ENCODE measurements at regions of chr12 and their contacts with region 1.

Region 1: DNA sequence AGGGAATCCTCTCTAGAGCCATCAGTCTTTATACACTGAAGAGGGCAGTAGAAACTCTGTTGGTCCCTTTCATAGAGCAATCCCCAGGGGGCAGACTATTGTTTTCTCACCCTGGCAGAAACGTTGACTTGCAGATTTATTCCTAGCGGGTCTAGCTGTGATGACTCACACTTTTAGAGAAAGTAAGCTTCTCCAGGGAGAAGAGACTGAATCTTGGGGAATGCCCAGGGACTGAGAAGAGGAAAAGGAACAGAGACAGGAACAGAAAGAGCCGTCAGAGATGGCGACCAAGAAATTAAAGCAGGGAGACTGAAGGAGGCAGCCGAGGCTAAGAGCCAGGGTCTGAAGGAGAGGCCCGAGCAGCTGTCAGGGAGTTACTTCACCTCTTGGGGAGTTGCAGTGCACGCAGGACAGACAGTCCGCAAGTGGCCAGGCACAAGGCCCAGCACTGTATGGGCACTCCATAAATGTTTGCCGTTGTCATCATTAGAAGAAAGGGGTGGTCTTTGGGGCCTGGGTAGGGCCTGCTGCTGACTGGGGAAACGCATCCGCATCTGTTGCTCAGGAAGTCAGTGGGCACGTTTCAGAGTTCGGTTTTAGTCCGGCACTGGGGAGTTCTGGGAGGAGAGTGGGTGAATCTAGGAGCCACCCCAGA is 13.0 kb downstream of the PLEKHG6 start:
- DNase-seq: peak in 6 of 9 experiments; percentile 40 to 83 (median 59)
- ATAC-seq: peak; percentile 85
- H3K4me3 ChIP-seq: peak overlapping the region; percentile 12 to 19
- H3K4me3 Mint-ChIP-seq: peak overlapping the region; percentile 80
- H3K27ac ChIP-seq: peak overlapping the region in 1 of 2 experiments; percentile 54
- H3K27ac Mint-ChIP-seq: peak overlapping the region; percentile 93
- H3K4me1 ChIP-seq: peaks cover 47% of the 10 kb centered on the region
- H3K4me1 Mint-ChIP-seq: peaks cover 63% of the 10 kb centered on the region
- H3K27me3 ChIP-seq: no peaks in the 10 kb centered on the region
- H3K27me3 Mint-ChIP-seq: no peaks in the 10 kb centered on the region
- CTCF ChIP-seq: peak; percentile 82

Region 2: GRCh38 chr12:6154730-6155459 is 168.6 kb before region 1 on chr12:
- CTCF ChIA-PET with region 1: no interaction called
- POLR2A ChIA-PET with region 1: no interaction called
- intact Hi-C with region 1: no loop called
- DNase-seq: no peak
- ATAC-seq: no peak
- H3K4me3 ChIP-seq: no peak overlapping the region
- H3K4me3 Mint-ChIP-seq: no peak overlapping the region
- H3K27ac ChIP-seq: no peak overlapping the region
- H3K27ac Mint-ChIP-seq: no peak overlapping the region
- H3K4me1 ChIP-seq: no peaks in the 10 kb centered on the region
- H3K4me1 Mint-ChIP-seq: peaks cover 9% of the 10 kb centered on the region
- H3K27me3 ChIP-seq: no peaks in the 10 kb centered on the region
- H3K27me3 Mint-ChIP-seq: no peaks in the 10 kb centered on the region
- CTCF ChIP-seq: no peak

Region 3: DNA sequence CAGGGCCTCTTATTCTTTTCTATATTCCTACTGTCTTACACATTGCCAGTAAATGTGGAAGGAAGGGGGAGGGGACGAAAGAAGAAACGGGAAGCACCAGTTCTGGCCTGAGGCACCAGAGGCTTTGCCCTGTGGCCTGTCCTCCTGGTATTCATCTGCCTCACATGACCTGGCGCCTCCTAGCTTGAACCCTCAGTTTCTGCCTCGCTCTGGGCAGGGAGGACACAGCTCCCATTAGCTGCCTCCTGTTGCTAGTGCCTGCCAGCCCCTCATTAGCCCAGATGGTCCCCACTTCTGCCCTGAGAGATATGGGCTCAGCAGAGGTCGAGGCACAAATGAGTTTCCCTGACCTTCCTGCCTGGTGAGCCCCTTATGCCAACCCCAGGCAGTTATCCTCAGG is 15.9 kb before region 1 on chr12:
- CTCF ChIA-PET with region 1: interaction called, 12 read pairs
- POLR2A ChIA-PET with region 1: no interaction called
- intact Hi-C with region 1: no loop called
- DNase-seq: no peak
- ATAC-seq: no peak
- H3K4me3 ChIP-seq: no peak overlapping the region
- H3K4me3 Mint-ChIP-seq: no peak overlapping the region
- H3K27ac ChIP-seq: no peak overlapping the region
- H3K27ac Mint-ChIP-seq: no peak overlapping the region
- H3K4me1 ChIP-seq: peaks cover 9% of the 10 kb centered on the region
- H3K4me1 Mint-ChIP-seq: no peaks in the 10 kb centered on the region
- H3K27me3 ChIP-seq: peaks cover 7 to 9% of the 10 kb centered on the region in 2 experiments
- H3K27me3 Mint-ChIP-seq: peaks cover 16% of the 10 kb centered on the region
- CTCF ChIP-seq: no peak

Region 4: GRCh38 chr12:6367065-6367968 is 43.9 kb after region 1 on chr12:
- CTCF ChIA-PET with region 1: interaction called, 36 read pairs
- POLR2A ChIA-PET with region 1: interaction called, 6 read pairs
- intact Hi-C with region 1: loop called (anchors 1 kb)
- DNase-seq: peak in 7 of 9 experiments; percentile 34 to 81 (median 54)
- ATAC-seq: peak; percentile 66
- H3K4me3 ChIP-seq: no peak overlapping the region
- H3K4me3 Mint-ChIP-seq: peak overlapping the region; percentile 26
- H3K27ac ChIP-seq: peak overlapping the region in 1 of 2 experiments; percentile 51
- H3K27ac Mint-ChIP-seq: peak overlapping the region; percentile 69
- H3K4me1 ChIP-seq: peaks cover 25% of the 10 kb centered on the region
- H3K4me1 Mint-ChIP-seq: peaks cover 37% of the 10 kb centered on the region
- H3K27me3 ChIP-seq: no peaks in the 10 kb centered on the region
- H3K27me3 Mint-ChIP-seq: no peaks in the 10 kb centered on the region
- CTCF ChIP-seq: no peak

Region 5: GRCh38 chr12:6380141-6381121 is 57.0 kb after region 1 on chr12:
- CTCF ChIA-PET with region 1: interaction called, 5 read pairs
- POLR2A ChIA-PET with region 1: interaction called, 10 read pairs
- intact Hi-C with region 1: no loop called
- DNase-seq: no peak
- ATAC-seq: no peak
- H3K4me3 ChIP-seq: no peak overlapping the region
- H3K4me3 Mint-ChIP-seq: no peak overlapping the region
- H3K27ac ChIP-seq: no peak overlapping the region
- H3K27ac Mint-ChIP-seq: no peak overlapping the region
- H3K4me1 ChIP-seq: peaks cover 28% of the 10 kb centered on the region
- H3K4me1 Mint-ChIP-seq: peaks cover 21% of the 10 kb centered on the region
- H3K27me3 ChIP-seq: peaks cover 0 to 12% of the 10 kb centered on the region in 2 experiments
- H3K27me3 Mint-ChIP-seq: peaks cover 22% of the 10 kb centered on the region
- CTCF ChIP-seq: no peak

Region 6: GRCh38 chr12:6546016-6546415 is 222.5 kb after region 1 on chr12:
- CTCF ChIA-PET with region 1: no interaction called
- POLR2A ChIA-PET with region 1: no interaction called
- intact Hi-C with region 1: no loop called
- DNase-seq: no peak
- ATAC-seq: no peak
- H3K4me3 ChIP-seq: no peak overlapping the region
- H3K4me3 Mint-ChIP-seq: no peak overlapping the region
- H3K27ac ChIP-seq: no peak overlapping the region
- H3K27ac Mint-ChIP-seq: no peak overlapping the region
- H3K4me1 ChIP-seq: no peaks in the 10 kb centered on the region
- H3K4me1 Mint-ChIP-seq: peaks cover 10% of the 10 kb centered on the region
- H3K27me3 ChIP-seq: no peaks in the 10 kb centered on the region
- H3K27me3 Mint-ChIP-seq: no peaks in the 10 kb centered on the region
- CTCF ChIP-seq: no peak